ENCODE measurements at regions of chr3 and their contacts with region 1.

Region 1: DNA sequence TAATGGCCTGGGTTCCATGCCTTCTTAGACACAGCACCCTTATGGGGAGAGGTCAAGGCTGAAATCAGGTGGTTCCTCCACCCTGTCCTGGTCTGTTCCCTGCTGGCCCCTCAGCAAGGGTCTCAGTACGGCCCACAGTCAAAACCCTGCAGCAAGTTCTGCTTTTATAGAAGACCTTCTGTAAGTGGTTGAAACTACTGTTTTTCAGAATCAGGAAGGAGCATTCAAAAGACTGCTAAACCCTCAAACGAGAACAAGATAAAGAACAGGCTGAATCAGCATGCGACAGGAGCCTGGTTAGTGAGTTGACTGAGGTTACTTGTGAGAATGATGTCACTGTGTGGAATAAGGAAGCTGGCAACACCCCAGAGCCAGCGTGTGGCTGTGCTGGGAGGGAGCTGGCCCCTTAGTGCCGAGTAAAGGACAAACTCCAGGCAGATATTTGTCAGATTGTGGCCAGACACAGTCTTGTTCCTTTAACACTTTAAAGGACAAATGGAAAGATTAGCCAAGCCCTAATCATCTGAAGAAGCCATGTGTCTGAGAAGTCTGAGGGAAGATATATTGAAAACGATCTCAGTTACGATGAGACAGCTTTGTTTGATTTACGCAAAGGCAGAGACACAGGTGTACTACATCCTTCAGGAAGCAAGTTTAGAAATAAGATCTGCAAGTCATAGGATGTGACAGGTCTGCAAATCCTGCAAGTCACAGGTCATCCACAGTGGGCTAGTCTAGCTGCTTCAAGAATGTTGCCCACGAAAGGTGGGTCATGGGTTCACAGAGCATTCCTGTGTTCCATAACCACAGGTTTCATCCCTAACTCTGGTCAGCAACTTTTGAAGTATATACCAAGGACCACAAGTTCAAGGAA is 54.0 kb downstream of the B3GNT5 start:
- DNase-seq: peak; percentile 86 to 99
- H3K4me3 ChIP-seq: peak overlapping the region; percentile 43
- H3K27ac ChIP-seq: peak overlapping the region; percentile 94
- H3K4me1 ChIP-seq: peaks cover 67% of the 10 kb centered on the region
- H3K27me3 ChIP-seq: no peaks in the 10 kb centered on the region
- CTCF ChIP-seq: no peak

Region 2: GRCh38 chr3:183178629-183179549 is 128.1 kb before region 1 on chr3:
- CTCF ChIA-PET with region 1: no interaction called
- POLR2A ChIA-PET with region 1: no interaction called
- intact Hi-C with region 1: loop called (anchors 1 kb)
- DNase-seq: peak; percentile 52 to 73
- H3K4me3 ChIP-seq: peak overlapping the region; percentile 71
- H3K27ac ChIP-seq: no peak overlapping the region
- H3K4me1 ChIP-seq: no peaks in the 10 kb centered on the region; the same call in 1 of the 2 replicates
- H3K27me3 ChIP-seq: no peaks in the 10 kb centered on the region
- CTCF ChIP-seq: peak; percentile 52; the same call in 1 of the 2 replicates

Region 3: GRCh38 chr3:183265834-183266417 is 41.1 kb before region 1 on chr3:
- CTCF ChIA-PET with region 1: interaction called, 3 read pairs
- POLR2A ChIA-PET with region 1: interaction called, 3 read pairs
- intact Hi-C with region 1: loop called (anchors 1 kb)
- DNase-seq: peak; percentile 73 to 99
- H3K4me3 ChIP-seq: no peak overlapping the region; the same call in 1 of the 2 replicates
- H3K27ac ChIP-seq: peak overlapping the region; percentile 85
- H3K4me1 ChIP-seq: peaks cover 65% of the 10 kb centered on the region
- H3K27me3 ChIP-seq: no peaks in the 10 kb centered on the region
- CTCF ChIP-seq: no peak

Region 4: GRCh38 chr3:183295238-183295637 is 11.8 kb before region 1 on chr3:
- CTCF ChIA-PET with region 1: interaction called, 4 read pairs
- POLR2A ChIA-PET with region 1: interaction called, 7 read pairs
- intact Hi-C with region 1: loop called (anchors 1 kb)
- DNase-seq: peak; percentile 88 to 98
- H3K4me3 ChIP-seq: no peak overlapping the region
- H3K27ac ChIP-seq: peak overlapping the region; percentile 89
- H3K4me1 ChIP-seq: peaks cover 56% of the 10 kb centered on the region
- H3K27me3 ChIP-seq: no peaks in the 10 kb centered on the region
- CTCF ChIP-seq: no peak

Region 5: GRCh38 chr3:183375787-183376186 is 68.8 kb after region 1 on chr3:
- CTCF ChIA-PET with region 1: interaction called, 4 read pairs
- POLR2A ChIA-PET with region 1: interaction called, 12 read pairs
- intact Hi-C with region 1: loop called (anchors 1 kb)
- DNase-seq: no peak
- H3K4me3 ChIP-seq: no peak overlapping the region
- H3K27ac ChIP-seq: 0 out of 2 replicates have a peak overlapping the region, but pooled peaks have one; percentile 90
- H3K4me1 ChIP-seq: peaks cover 66% of the 10 kb centered on the region
- H3K27me3 ChIP-seq: no peaks in the 10 kb centered on the region
- CTCF ChIP-seq: no peak

Measured in PC-9 (cell line).